ENCODE measurements at regions of chr18 and their contacts with region 1.

Region 1: GRCh38 chr18:36149514-36150289 is 20.0 kb downstream of the ELP2 start:
- DNase-seq: no peak
- ATAC-seq: no peak
- H3K4me3 ChIP-seq: no peak overlapping the region
- H3K4me3 Mint-ChIP-seq: no peak overlapping the region
- H3K27ac ChIP-seq: no peak overlapping the region
- H3K27ac Mint-ChIP-seq: no peak overlapping the region
- H3K4me1 ChIP-seq: no peaks in the 10 kb centered on the region
- H3K4me1 Mint-ChIP-seq: peaks cover 5 to 19% (median 13%) of the 10 kb centered on the region in 3 donors
- H3K27me3 ChIP-seq: no peaks in the 10 kb centered on the region
- H3K27me3 Mint-ChIP-seq: no peaks in the 10 kb centered on the region

Region 2: GRCh38 chr18:36129300-36130038 is 20.2 kb before region 1 on chr18 and contains the starts of genes ELP2 and SLC39A6:
- CTCF ChIA-PET with region 1: interaction called, 3 to 6 read pairs
- POLR2A ChIA-PET with region 1: interaction called, 3 to 13 read pairs
- DNase-seq: peak; percentile 87 to 98 (median 93)
- ATAC-seq: peak; percentile 91 to 92 (median 92)
- H3K4me3 ChIP-seq: peak within 1 kb of the TSS; percentile 89 to 99
- H3K4me3 Mint-ChIP-seq: peak within 1 kb of the TSS; percentile 95 to 98 (median 96)
- H3K27ac ChIP-seq: peak within 1 kb of the TSS; percentile 96
- H3K27ac Mint-ChIP-seq: peak within 1 kb of the TSS; percentile 97
- H3K4me1 ChIP-seq: peaks cover 26 to 39% of the 10 kb centered on the region in 2 experiments
- H3K4me1 Mint-ChIP-seq: peaks cover 66 to 69% (median 68%) of the 10 kb centered on the region in 3 donors
- H3K27me3 ChIP-seq: no peaks in the 10 kb centered on the region
- H3K27me3 Mint-ChIP-seq: no peaks in the 10 kb centered on the region
- total RNA-seq, gene ELP2: 109 to 156 (median 150) TPM
- total RNA-seq, gene SLC39A6: 14.3 to 18.3 (median 16.8) TPM

Region 3: GRCh38 chr18:36160959-36161371 is 11.3 kb after region 1 on chr18:
- CTCF ChIA-PET with region 1: no interaction called
- POLR2A ChIA-PET with region 1: interaction called, 3 to 12 read pairs
- DNase-seq: no peak
- ATAC-seq: no peak
- H3K4me3 ChIP-seq: no peak overlapping the region
- H3K4me3 Mint-ChIP-seq: no peak overlapping the region
- H3K27ac ChIP-seq: no peak overlapping the region
- H3K27ac Mint-ChIP-seq: peak overlapping the region in 1 of 2 donors; percentile 34
- H3K4me1 ChIP-seq: no peaks in the 10 kb centered on the region
- H3K4me1 Mint-ChIP-seq: peaks cover 10 to 33% (median 25%) of the 10 kb centered on the region in 3 donors
- H3K27me3 ChIP-seq: no peaks in the 10 kb centered on the region
- H3K27me3 Mint-ChIP-seq: no peaks in the 10 kb centered on the region

Region 4: GRCh38 chr18:36203360-36203895 is 53.7 kb after region 1 on chr18:
- CTCF ChIA-PET with region 1: interaction called in 1 of 2 experiments, 14 read pairs
- POLR2A ChIA-PET with region 1: no interaction called
- DNase-seq: no peak
- ATAC-seq: no peak
- H3K4me3 ChIP-seq: no peak overlapping the region
- H3K4me3 Mint-ChIP-seq: no peak overlapping the region
- H3K27ac ChIP-seq: no peak overlapping the region
- H3K27ac Mint-ChIP-seq: no peak overlapping the region
- H3K4me1 ChIP-seq: no peaks in the 10 kb centered on the region
- H3K4me1 Mint-ChIP-seq: no peaks in the 10 kb centered on the region
- H3K27me3 ChIP-seq: peaks cover 0 to 10% of the 10 kb centered on the region in 2 experiments
- H3K27me3 Mint-ChIP-seq: peaks cover 0 to 6% of the 10 kb centered on the region in 2 donors

Region 5: DNA sequence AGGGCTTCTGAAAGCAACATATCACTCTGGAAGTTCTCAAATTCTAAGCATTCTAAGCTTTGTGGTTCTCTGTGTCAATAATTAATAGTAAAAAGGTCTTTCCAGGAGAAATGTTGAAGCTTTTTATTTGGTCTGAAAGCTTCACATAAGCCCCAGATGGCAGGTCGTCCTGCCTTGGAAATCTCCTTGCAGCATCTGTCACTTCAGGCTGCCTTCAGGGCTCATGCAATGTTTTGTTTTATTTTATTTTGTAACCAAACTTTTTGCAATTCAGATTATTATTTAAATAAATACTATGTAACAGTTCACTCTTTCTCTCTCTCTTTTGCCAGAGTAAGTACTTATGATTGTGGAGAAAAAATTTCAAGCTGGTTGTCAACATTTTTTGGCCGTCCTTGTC is 101.1 kb after region 1 on chr18:
- CTCF ChIA-PET with region 1: no interaction called
- POLR2A ChIA-PET with region 1: interaction called in 1 of 2 experiments, 16 read pairs
- DNase-seq: no peak
- ATAC-seq: no peak
- H3K4me3 ChIP-seq: no peak overlapping the region
- H3K4me3 Mint-ChIP-seq: no peak overlapping the region
- H3K27ac ChIP-seq: no peak overlapping the region
- H3K27ac Mint-ChIP-seq: no peak overlapping the region
- H3K4me1 ChIP-seq: no peaks in the 10 kb centered on the region
- H3K4me1 Mint-ChIP-seq: no peaks in the 10 kb centered on the region
- H3K27me3 ChIP-seq: peaks cover 0 to 14% of the 10 kb centered on the region in 2 experiments
- H3K27me3 Mint-ChIP-seq: peaks cover 36 to 40% of the 10 kb centered on the region in 2 donors

Region 6: DNA sequence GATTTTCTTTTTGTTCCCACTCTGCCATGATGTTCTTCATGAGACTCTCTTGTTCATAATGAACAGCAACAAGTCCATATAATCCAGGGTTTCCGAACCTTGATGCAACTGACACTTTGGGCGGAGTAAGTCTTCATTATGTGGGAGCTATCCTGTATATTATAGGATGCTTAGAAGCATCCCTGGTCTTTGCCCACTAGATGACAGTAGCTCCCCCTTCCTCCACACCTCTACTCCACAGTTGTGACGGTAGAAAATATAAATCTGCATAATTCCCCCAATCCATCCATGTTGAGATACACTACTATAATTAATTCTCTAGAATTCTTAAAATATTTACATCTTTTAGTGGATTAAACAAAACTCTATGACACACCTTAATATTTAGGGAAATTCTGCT is 1898.1 kb after region 1 on chr18:
- CTCF ChIA-PET with region 1: no interaction called
- POLR2A ChIA-PET with region 1: no interaction called
- DNase-seq: no peak
- ATAC-seq: no peak
- H3K4me3 ChIP-seq: no peak overlapping the region
- H3K4me3 Mint-ChIP-seq: no peak overlapping the region
- H3K27ac ChIP-seq: no peak overlapping the region
- H3K27ac Mint-ChIP-seq: no peak overlapping the region
- H3K4me1 ChIP-seq: no peaks in the 10 kb centered on the region
- H3K4me1 Mint-ChIP-seq: no peaks in the 10 kb centered on the region
- H3K27me3 ChIP-seq: no peaks in the 10 kb centered on the region
- H3K27me3 Mint-ChIP-seq: no peaks in the 10 kb centered on the region

Measured in T-cell (primary cell).